ENCODE measurements at regions of chr7 and their contacts with region 1.

Region 1: GRCh38 chr7:157355784-157356539 is 19.2 kb downstream of the DNAJB6 start:
- DNase-seq: no peak
- H3K4me3 Mint-ChIP-seq: no peak overlapping the region
- H3K27ac Mint-ChIP-seq: peak overlapping the region; percentile 59
- H3K4me1 Mint-ChIP-seq: peaks cover 50% of the 10 kb centered on the region
- H3K27me3 Mint-ChIP-seq: no peaks in the 10 kb centered on the region

Region 2: GRCh38 chr7:157339777-157340677 is 15.9 kb before region 1 on chr7:
- CTCF ChIA-PET with region 1: interaction called, 13 read pairs
- DNase-seq: peak; percentile 81
- H3K4me3 Mint-ChIP-seq: peak overlapping the region; percentile 42
- H3K27ac Mint-ChIP-seq: peak overlapping the region; percentile 78
- H3K4me1 Mint-ChIP-seq: peaks cover 56% of the 10 kb centered on the region
- H3K27me3 Mint-ChIP-seq: peaks cover 19% of the 10 kb centered on the region